Colonic mucosa (tissue), 4 donors: ENCODE measurements at regions of chr14 and their contacts with region 1.

Region 1: GRCh38 chr14:101559624-101560533 is 1.4 kb upstream of the DIO3 start:
- DNase-seq: no peak
- H3K4me3 ChIP-seq: peak overlapping the region; percentile 38
- H3K27ac ChIP-seq: no peak overlapping the region
- H3K4me1 ChIP-seq: no peaks in the 10 kb centered on the region
- H3K27me3 ChIP-seq: peaks cover 49% of the 10 kb centered on the region
- CTCF ChIP-seq: no peak

Region 2: GRCh38 chr14:101183376-101184103 is 376.3 kb before region 1 on chr14:
- intact Hi-C with region 1: loop called (anchors 10 kb)
- DNase-seq: no peak
- H3K4me3 ChIP-seq: no peak overlapping the region
- H3K27ac ChIP-seq: no peak overlapping the region
- H3K4me1 ChIP-seq: no peaks in the 10 kb centered on the region
- H3K27me3 ChIP-seq: no peaks in the 10 kb centered on the region
- CTCF ChIP-seq: peak; percentile 42

Region 3: GRCh38 chr14:101475456-101476257 is 84.2 kb before region 1 on chr14:
- intact Hi-C with region 1: loop called (anchors 5 kb)
- DNase-seq: peak; percentile 29
- H3K4me3 ChIP-seq: no peak overlapping the region
- H3K27ac ChIP-seq: peak overlapping the region; percentile 56
- H3K4me1 ChIP-seq: peaks cover 5% of the 10 kb centered on the region
- H3K27me3 ChIP-seq: no peaks in the 10 kb centered on the region
- CTCF ChIP-seq: no peak

Region 4: GRCh38 chr14:101620031-101620788 is 60.3 kb after region 1 on chr14:
- intact Hi-C with region 1: no loop called
- DNase-seq: no peak
- H3K4me3 ChIP-seq: no peak overlapping the region
- H3K27ac ChIP-seq: no peak overlapping the region
- H3K4me1 ChIP-seq: no peaks in the 10 kb centered on the region
- H3K27me3 ChIP-seq: no peaks in the 10 kb centered on the region
- CTCF ChIP-seq: no peak